ENCODE measurements at regions of chr6 and their contacts with region 1.

Region 1: DNA sequence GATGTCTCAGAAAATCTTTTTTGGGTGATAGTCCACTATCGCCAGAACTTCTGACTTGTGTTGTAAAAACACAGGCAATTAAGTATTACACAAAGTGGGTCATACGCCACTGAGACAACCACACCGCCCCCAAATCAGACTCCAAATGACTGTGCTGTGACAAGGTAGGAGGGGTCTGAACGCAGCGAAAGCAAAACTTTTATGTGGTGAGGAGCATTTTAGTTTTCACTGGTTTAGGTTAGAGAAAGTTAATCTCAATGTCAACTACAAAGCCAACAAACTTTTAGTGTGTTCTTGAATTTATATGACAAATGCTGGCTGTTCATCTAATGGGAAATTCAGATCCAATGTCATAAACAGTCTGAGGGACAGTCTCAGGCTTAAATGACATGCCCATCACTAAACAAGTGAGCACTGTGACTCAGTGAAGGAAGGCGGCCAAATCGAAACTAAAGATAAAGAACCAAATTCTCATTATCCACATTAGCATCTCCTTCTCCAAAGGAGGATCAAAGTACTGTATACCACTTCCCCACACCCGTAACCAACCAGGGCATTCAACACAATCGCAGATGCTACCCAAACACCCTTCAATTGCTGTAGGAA is 186.7 kb downstream of the GJA10 start:
- DNase-seq: no peak
- ATAC-seq: peak; percentile 61
- H3K4me3 Mint-ChIP-seq: peak overlapping the region; percentile 84
- H3K27ac Mint-ChIP-seq: peak overlapping the region; percentile 86
- H3K4me1 Mint-ChIP-seq: peaks cover 96% of the 10 kb centered on the region
- H3K27me3 Mint-ChIP-seq: no peaks in the 10 kb centered on the region
- CTCF ChIP-seq: no peak

Region 2: DNA sequence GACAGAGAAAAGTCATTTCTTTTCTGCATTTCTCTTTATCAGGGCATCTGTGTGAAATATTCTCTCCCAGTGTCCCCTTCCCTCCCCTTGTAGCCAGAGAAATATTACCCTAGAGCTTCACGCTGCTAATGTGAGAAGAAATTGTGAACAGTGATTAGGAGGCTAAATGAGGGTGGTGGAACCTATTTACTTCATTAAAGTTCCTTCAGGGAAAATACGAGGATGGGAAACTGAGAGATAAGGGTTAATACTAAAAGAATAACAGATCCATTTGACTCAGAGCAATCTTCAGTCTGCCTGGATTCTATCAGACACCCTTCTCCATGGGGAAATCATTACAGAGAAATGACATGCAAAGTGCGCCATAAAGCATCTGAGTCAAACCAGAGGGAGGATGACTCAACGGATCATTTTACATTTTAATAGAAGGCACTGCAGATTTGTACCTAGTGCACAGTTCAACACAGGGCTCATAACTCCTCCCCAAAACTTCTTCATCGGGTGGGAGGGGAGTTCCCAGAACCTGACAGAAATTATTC is 55.4 kb before region 1 on chr6:
- CTCF ChIA-PET with region 1: no interaction called
- POLR2A ChIA-PET with region 1: interaction called, 3 read pairs
- intact Hi-C with region 1: loop called (anchors 10 kb)
- DNase-seq: no peak
- ATAC-seq: peak; percentile 97
- H3K4me3 Mint-ChIP-seq: peak overlapping the region; percentile 44
- H3K27ac Mint-ChIP-seq: peak overlapping the region; percentile 67
- H3K4me1 Mint-ChIP-seq: peaks cover 68% of the 10 kb centered on the region
- H3K27me3 Mint-ChIP-seq: no peaks in the 10 kb centered on the region
- CTCF ChIP-seq: no peak

Region 3: GRCh38 chr6:90121982-90122381 is 41.0 kb after region 1 on chr6:
- CTCF ChIA-PET with region 1: no interaction called
- POLR2A ChIA-PET with region 1: interaction called, 34 read pairs
- intact Hi-C with region 1: loop called (anchors 1 kb)
- DNase-seq: no peak
- ATAC-seq: peak; percentile 92
- H3K4me3 Mint-ChIP-seq: peak overlapping the region; percentile 53
- H3K27ac Mint-ChIP-seq: peak overlapping the region; percentile 79
- H3K4me1 Mint-ChIP-seq: peaks cover 81% of the 10 kb centered on the region
- H3K27me3 Mint-ChIP-seq: no peaks in the 10 kb centered on the region
- CTCF ChIP-seq: no peak

Region 4: GRCh38 chr6:90274451-90275030 is 193.6 kb after region 1 on chr6:
- CTCF ChIA-PET with region 1: no interaction called
- POLR2A ChIA-PET with region 1: interaction called, 4 read pairs
- intact Hi-C with region 1: loop called (anchors 5 kb)
- DNase-seq: peak; percentile 43
- ATAC-seq: peak; percentile 84
- H3K4me3 Mint-ChIP-seq: peak overlapping the region; percentile 64
- H3K27ac Mint-ChIP-seq: peak overlapping the region; percentile 85
- H3K4me1 Mint-ChIP-seq: peaks cover 93% of the 10 kb centered on the region
- H3K27me3 Mint-ChIP-seq: no peaks in the 10 kb centered on the region
- CTCF ChIP-seq: no peak

Region 5: DNA sequence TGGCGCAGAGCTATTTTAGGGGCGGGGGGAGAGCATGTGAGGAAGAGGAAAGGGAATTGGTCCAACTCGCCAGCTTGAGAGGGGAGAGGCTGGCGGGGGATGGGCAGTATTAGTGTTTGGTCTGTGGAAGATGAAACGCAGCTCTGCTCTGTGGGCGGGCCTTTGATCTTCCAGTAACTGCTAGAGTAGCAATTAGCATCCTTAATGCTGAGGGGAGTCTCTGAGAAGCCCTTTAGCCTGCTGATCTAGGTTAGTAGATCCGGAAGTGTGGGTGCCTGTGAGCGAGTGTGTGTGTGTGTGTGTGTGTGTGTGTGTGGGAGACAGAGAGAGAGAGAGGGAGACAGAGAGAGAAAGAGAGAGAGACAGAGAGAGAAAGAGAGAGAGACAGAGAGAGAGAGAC is 332.9 kb after region 1 on chr6:
- CTCF ChIA-PET with region 1: no interaction called
- POLR2A ChIA-PET with region 1: no interaction called
- intact Hi-C with region 1: loop called (anchors 5 kb)
- DNase-seq: no peak
- ATAC-seq: peak; percentile 64
- H3K4me3 Mint-ChIP-seq: peak overlapping the region; percentile 70
- H3K27ac Mint-ChIP-seq: peak overlapping the region; percentile 84
- H3K4me1 Mint-ChIP-seq: peaks cover 32% of the 10 kb centered on the region
- H3K27me3 Mint-ChIP-seq: no peaks in the 10 kb centered on the region
- CTCF ChIP-seq: no peak

Measured in activated B cell treated with CpG ODN at 0.5 μM for 24 hours (primary cell).